K562 (cell line): ENCODE measurements at regions of chr11 and their contacts with region 1.

Region 1: DNA sequence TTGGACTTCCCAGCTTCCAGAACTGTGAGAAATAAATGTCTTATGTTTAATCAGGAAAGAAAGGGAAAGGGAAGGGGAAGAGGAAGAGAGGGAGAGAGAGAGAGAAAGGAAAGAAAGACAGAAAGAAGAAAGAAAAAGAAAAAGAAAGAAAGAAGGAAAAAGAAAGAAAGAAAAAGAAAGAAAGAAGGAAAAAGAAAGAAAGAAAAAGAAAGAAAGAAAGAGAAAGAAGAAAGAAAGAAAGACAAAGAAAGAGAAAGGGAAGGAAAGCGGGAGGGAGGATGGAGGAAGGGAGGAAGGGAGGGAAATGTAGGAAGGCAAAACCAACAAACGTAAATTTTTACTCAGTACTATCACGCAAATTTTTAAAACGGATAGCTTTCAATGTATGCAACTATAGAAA is 2281.8 kb downstream of the LRRC4C start:
- DNase-seq: no peak
- ATAC-seq: no peak
- H3K4me3 ChIP-seq: no peak overlapping the region
- H3K27ac ChIP-seq: no peak overlapping the region
- H3K4me1 ChIP-seq: no peaks in the 10 kb centered on the region
- H3K27me3 ChIP-seq: no peaks in the 10 kb centered on the region
- CTCF ChIP-seq: no peak
- EP300 ChIP-seq: no peak
- POLR2A ChIP-seq: no peak
- RAD21 ChIP-seq: no peak

Region 2: DNA sequence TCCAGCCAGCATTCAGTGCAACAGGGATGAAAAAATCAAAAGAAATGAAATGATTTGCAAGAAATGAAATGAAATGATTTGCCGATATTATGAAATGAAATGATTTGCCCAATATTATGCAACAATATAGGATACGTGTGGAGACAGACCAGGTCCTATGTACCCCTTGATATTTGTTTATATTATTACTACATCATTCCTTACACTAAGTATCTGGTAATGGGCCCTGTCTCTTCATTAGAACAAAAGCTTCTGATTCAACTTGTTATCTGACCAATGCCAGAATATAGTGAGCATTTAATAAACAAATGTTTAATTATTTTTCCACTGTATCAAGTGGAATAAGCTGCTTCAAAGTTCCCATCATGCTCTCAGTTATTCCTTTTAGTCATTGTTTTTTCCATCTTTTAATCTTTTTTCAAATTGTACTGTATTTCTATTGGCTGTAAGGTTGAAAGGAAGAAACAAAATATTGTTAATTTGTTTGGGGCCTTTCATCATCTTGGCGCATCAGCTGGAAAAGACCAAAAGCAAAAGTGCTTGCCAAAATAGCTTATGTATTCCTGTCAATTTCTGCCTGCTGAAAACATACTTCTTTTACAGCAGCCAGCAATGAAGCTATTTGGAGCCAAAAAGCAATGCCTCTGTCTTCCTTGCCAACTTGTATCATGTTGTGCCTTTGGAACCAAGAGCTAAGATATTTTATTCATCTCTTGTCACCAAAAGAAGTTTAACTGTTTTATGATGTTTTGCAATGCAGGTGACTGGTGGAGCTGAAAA is 33.1 kb before region 1 on chr11:
- CTCF ChIA-PET with region 1: no interaction called
- POLR2A ChIA-PET with region 1: no interaction called
- in situ Hi-C with region 1: no loop called
- intact Hi-C with region 1: loop called (anchors 1 kb)
- DNase-seq: no peak
- ATAC-seq: no peak
- H3K4me3 ChIP-seq: no peak overlapping the region
- H3K27ac ChIP-seq: no peak overlapping the region
- H3K4me1 ChIP-seq: no peaks in the 10 kb centered on the region
- H3K27me3 ChIP-seq: no peaks in the 10 kb centered on the region
- CTCF ChIP-seq: no peak
- EP300 ChIP-seq: no peak
- POLR2A ChIP-seq: no peak
- RAD21 ChIP-seq: no peak

Region 3: DNA sequence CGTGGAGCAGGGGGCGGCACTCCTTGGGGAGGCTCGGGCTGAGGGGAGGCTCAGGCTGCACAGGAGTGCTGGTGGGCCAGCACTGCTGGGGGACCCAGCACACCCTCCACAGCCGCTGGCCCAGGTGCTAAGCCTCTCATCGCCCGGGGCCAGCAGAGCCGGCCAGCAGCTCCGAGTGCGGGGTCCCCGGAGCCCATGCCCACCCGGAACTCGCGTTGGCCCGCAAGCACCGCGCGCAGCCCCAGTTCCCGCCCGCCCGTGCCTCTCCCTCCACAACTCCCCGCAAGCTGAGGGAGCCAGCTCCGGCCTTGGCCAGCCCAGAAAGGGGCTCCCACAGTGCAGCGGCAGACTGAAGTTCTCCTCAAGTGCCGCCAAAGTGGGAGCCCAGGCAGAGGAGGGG is 15.0 kb after region 1 on chr11:
- CTCF ChIA-PET with region 1: no interaction called
- POLR2A ChIA-PET with region 1: no interaction called
- in situ Hi-C with region 1: no loop called
- intact Hi-C with region 1: no loop called
- DNase-seq: no peak
- ATAC-seq: no peak
- H3K4me3 ChIP-seq: no peak overlapping the region
- H3K27ac ChIP-seq: no peak overlapping the region
- H3K4me1 ChIP-seq: no peaks in the 10 kb centered on the region
- H3K27me3 ChIP-seq: no peaks in the 10 kb centered on the region
- CTCF ChIP-seq: no peak
- EP300 ChIP-seq: no peak
- POLR2A ChIP-seq: no peak
- RAD21 ChIP-seq: no peak